ENCODE measurements at regions of chr6 and their contacts with region 1.

Region 1: GRCh38 chr6:35297601-35298481 is at the start of gene DEF6:
- DNase-seq: peak; percentile 96
- ATAC-seq: peak; percentile 86
- H3K4me3 Mint-ChIP-seq: peak within 1 kb of the TSS; percentile 91
- H3K27ac Mint-ChIP-seq: peak within 1 kb of the TSS; percentile 92
- H3K4me1 Mint-ChIP-seq: peaks cover 54% of the 10 kb centered on the region
- H3K27me3 Mint-ChIP-seq: no peaks in the 10 kb centered on the region
- total RNA-seq, gene DEF6: 153 to 194 TPM

Region 2: DNA sequence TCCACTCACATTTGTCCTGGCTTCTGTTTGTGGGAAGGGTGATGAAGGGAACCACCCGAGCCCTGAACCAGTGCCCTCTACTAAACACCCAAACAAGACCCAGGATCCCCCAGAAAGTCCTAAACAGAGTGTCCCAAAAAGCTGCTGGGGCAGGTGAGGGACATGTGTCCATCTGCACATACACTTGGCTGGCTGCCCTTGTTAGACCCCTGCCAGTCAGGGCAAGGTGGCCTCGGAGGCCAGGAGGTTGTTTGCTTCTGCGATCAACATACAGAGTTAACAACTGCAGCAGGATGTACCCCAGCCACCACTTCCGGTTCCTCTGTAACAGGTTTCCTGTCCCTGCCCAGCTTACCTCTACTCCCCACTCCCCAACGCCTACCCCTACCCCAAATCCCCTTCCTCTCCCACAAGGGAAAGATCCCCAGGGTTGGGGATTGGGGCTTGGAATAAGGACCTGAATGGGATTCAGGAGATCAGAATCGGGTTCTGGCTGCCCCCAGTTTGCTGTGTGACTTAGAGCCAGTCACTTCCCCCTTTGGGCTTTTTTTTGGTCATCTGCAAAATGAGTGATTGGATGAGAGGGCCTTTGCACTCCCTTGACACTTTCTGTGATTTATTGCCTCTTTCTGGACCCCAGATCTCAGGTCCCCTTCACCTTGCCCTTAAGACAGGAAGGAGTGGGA is 13.7 kb after region 1 on chr6:
- CTCF ChIA-PET with region 1: interaction called, 69 read pairs
- DNase-seq: peak; percentile 82
- ATAC-seq: peak; percentile 88
- H3K4me3 Mint-ChIP-seq: peak overlapping the region; percentile 62
- H3K27ac Mint-ChIP-seq: peak overlapping the region; percentile 97
- H3K4me1 Mint-ChIP-seq: peaks cover 75% of the 10 kb centered on the region
- H3K27me3 Mint-ChIP-seq: no peaks in the 10 kb centered on the region

Region 3: GRCh38 chr6:35327349-35328027 is 29.6 kb after region 1 on chr6:
- CTCF ChIA-PET with region 1: interaction called, 249 read pairs
- DNase-seq: peak; percentile 87
- ATAC-seq: peak; percentile 98
- H3K4me3 Mint-ChIP-seq: no peak overlapping the region
- H3K27ac Mint-ChIP-seq: peak overlapping the region; percentile 73
- H3K4me1 Mint-ChIP-seq: peaks cover 20% of the 10 kb centered on the region
- H3K27me3 Mint-ChIP-seq: no peaks in the 10 kb centered on the region

Region 4: DNA sequence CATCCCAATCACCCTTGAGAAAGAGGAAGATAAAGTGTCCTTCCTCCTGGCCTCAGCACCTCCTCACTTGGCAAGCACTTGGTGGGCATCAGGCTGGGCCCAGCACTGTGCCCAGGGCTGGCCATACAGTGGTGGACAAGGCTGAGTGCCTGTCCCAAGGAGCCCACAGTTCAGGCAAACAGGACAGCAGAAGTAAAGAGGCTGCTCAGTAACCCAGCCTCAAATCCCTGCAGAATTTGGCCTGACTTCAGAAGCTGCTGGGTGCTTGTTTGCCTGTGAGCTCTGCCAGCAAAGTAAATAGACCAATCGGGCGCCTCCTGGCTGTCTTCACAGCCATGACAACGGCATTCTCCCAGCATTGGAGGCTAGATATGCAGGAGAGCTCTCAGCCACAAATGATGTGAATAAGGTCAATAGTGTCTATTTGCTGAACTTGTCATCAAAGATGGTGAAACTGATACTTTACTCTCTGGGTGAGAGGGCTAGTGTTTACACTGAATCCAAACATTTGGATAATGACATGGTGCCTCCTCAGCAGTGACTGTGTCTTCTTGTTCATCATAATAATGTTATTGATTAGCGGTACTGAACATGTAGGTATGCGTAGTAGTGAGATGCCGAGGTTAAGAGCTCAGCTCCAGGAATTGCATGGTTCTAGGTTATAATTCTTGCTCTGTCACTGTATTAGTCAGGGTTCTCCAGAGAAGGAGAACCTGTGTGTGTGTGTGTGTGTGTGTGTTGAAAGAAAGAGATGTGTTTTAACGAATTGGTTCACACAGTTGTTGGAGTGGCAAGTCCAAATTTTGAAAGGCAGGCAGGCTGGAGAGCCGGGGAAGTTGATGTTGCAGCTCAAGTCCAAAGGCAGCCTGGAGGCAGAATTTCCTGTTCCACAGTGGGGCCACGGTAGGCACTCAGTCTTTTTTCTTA is 117.5 kb after region 1 on chr6:
- CTCF ChIA-PET with region 1: interaction called, 13 read pairs
- DNase-seq: peak; percentile 52
- ATAC-seq: no peak
- H3K4me3 Mint-ChIP-seq: no peak overlapping the region
- H3K27ac Mint-ChIP-seq: peak overlapping the region; percentile 3
- H3K4me1 Mint-ChIP-seq: peaks cover 62% of the 10 kb centered on the region
- H3K27me3 Mint-ChIP-seq: no peaks in the 10 kb centered on the region

Region 5: GRCh38 chr6:35468181-35468979 is 170.5 kb after region 1 on chr6 and contains the start of gene RPL10A:
- CTCF ChIA-PET with region 1: interaction called, 33 read pairs
- DNase-seq: peak; percentile 98
- ATAC-seq: peak; percentile 87
- H3K4me3 Mint-ChIP-seq: peak within 1 kb of the TSS; percentile 99
- H3K27ac Mint-ChIP-seq: peak within 1 kb of the TSS; percentile 97
- H3K4me1 Mint-ChIP-seq: peaks cover 43% of the 10 kb centered on the region
- H3K27me3 Mint-ChIP-seq: no peaks in the 10 kb centered on the region
- total RNA-seq, gene RPL10A: 1,163 to 1,382 TPM

Region 6: GRCh38 chr6:35620706-35621105 is 322.9 kb after region 1 on chr6:
- CTCF ChIA-PET with region 1: no interaction called
- DNase-seq: no peak
- ATAC-seq: no peak
- H3K4me3 Mint-ChIP-seq: no peak overlapping the region
- H3K27ac Mint-ChIP-seq: no peak overlapping the region
- H3K4me1 Mint-ChIP-seq: peaks cover 6% of the 10 kb centered on the region
- H3K27me3 Mint-ChIP-seq: no peaks in the 10 kb centered on the region